ENCODE measurements at regions of chr6 and their contacts with region 1.

Region 1: DNA sequence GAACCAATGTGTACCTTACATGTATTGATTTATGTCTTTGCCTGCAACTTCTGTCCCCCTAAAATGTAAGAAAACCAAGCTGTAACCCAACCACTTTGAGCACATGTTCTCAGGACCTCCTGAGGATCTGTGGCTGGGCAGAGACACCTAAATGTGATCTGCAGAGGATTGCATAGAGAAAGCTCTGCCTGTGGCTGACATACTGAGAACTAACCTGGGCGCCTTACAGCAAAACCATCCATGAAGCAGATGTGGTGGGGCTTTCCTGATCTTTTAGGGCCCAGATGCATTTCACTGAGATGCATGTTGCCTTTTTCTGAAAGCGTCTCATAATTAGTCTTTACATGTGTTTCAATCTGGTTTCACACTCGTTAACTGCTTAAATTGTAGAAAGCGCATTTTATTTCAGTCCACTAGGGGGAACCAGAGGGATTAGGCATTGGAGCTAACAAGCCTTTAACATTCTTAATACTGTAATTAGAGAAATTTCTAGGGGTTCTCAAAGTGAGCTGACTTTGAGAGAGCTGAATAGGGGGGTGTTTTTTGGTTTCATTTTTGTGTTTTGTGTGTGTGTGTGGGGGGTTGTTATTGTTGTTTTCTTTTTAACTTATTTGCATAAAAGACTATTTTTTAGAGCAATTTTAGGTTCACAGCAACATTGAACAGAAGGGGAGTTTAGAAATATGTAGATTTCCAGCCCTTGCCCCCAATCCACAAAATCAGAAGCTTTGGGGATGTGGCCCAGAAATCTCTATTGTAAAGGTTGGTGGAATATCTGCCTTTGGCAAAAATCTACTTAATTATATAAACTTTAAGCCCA is 50.9 kb upstream of the FAM184A start:
- DNase-seq: peak; percentile 81
- H3K4me3 Mint-ChIP-seq: no peak overlapping the region
- H3K27ac Mint-ChIP-seq: peak overlapping the region; percentile 66
- H3K4me1 Mint-ChIP-seq: peaks cover 21% of the 10 kb centered on the region
- H3K27me3 Mint-ChIP-seq: no peaks in the 10 kb centered on the region
- CTCF ChIP-seq: peak; percentile 72

Region 2: DNA sequence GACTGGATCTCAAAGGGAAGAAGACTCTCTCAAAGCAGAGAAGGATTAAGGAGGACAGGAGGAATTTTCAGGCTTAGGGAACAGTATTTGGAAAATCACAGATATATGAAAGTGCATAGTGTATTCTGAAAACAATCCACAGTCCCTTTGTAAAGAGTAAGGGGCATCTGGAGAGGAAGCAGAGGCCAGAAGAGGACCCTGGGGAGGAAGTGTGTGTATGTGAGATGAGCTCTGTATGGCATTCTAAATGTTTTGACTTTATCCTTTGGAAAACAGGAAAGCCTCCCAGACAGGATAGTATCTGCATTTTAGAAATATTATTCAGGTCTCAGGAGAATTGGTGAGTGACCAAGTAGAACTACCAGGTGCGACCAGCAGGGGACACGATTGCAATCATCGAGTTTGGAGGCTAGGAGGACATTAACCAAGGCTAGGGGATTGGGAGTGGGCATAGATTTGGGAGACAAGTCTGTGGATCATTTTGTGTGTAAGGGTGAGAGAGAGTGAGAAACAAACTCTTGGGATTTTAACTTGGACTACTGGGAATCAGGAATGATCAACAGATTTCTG is 12.6 kb before region 1 on chr6:
- CTCF ChIA-PET with region 1: interaction called, 16 read pairs
- POLR2A ChIA-PET with region 1: no interaction called
- intact Hi-C with region 1: no loop called
- DNase-seq: no peak
- H3K4me3 Mint-ChIP-seq: no peak overlapping the region
- H3K27ac Mint-ChIP-seq: no peak overlapping the region
- H3K4me1 Mint-ChIP-seq: no peaks in the 10 kb centered on the region
- H3K27me3 Mint-ChIP-seq: no peaks in the 10 kb centered on the region
- CTCF ChIP-seq: peak; percentile 31

Measured in MCF 10A (cell line).